ENCODE measurements at regions of chr12 and their contacts with region 1.

Region 1: GRCh38 chr12:101885912-101886561 is 8.7 kb downstream of the DRAM1 start:
- DNase-seq: no peak
- H3K4me3 ChIP-seq: no peak overlapping the region
- H3K27ac ChIP-seq: no peak overlapping the region
- H3K4me1 ChIP-seq: no peaks in the 10 kb centered on the region; the same call in 1 of the 2 replicates
- H3K27me3 ChIP-seq: no peaks in the 10 kb centered on the region
- CTCF ChIP-seq: no peak

Region 2: DNA sequence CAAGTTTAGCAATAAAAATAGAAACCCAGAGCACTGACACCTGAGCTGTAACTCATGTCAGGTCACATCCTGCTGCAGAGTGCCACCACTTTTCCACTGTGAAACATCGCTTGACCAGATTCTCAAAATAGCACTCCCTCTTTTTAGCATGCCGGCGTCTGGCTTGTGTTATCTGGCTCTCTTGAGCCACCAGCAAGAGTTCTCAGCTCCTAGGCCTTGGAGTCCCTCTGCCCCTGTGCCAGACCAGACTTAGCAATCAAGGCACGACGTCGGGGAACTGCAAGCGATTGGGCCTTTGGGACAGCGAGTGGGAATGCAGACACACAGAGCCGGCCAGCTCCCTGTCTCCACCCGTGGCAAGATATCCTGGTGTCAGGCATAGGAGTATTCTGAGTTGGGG is 358.4 kb before region 1 on chr12:
- CTCF ChIA-PET with region 1: no interaction called
- POLR2A ChIA-PET with region 1: no interaction called
- intact Hi-C with region 1: no loop called
- DNase-seq: no peak
- H3K4me3 ChIP-seq: no peak overlapping the region
- H3K27ac ChIP-seq: no peak overlapping the region
- H3K4me1 ChIP-seq: no peaks in the 10 kb centered on the region
- H3K27me3 ChIP-seq: no peaks in the 10 kb centered on the region
- CTCF ChIP-seq: no peak

Region 3: DNA sequence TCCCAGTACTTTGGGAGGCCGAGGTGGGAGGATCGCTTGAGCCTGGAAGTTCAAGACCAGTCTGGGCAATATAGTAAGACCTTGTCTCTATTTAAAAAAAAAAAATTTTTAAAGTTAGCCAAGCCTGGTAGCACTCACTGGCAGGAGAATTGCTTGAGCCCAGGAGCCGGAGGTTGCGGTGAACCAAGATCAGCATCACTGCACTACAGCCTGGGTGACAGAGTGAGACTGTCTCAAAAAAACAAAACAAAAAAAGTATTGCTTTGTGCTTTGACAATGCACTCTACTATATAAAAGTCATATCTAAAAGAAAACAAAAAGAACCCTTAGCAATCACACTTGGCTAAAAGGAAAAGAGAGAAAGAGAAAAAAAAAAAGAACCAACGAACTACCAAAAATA is 82.1 kb before region 1 on chr12:
- CTCF ChIA-PET with region 1: no interaction called
- POLR2A ChIA-PET with region 1: interaction called, 13 read pairs
- intact Hi-C with region 1: no loop called
- DNase-seq: no peak
- H3K4me3 ChIP-seq: no peak overlapping the region
- H3K27ac ChIP-seq: no peak overlapping the region
- H3K4me1 ChIP-seq: no peaks in the 10 kb centered on the region
- H3K27me3 ChIP-seq: no peaks in the 10 kb centered on the region
- CTCF ChIP-seq: no peak

Region 4: GRCh38 chr12:101863981-101864380 is 22.1 kb before region 1 on chr12:
- CTCF ChIA-PET with region 1: no interaction called
- POLR2A ChIA-PET with region 1: interaction called, 17 read pairs
- intact Hi-C with region 1: no loop called
- DNase-seq: no peak
- H3K4me3 ChIP-seq: no peak overlapping the region
- H3K27ac ChIP-seq: no peak overlapping the region
- H3K4me1 ChIP-seq: peaks cover 17% of the 10 kb centered on the region
- H3K27me3 ChIP-seq: no peaks in the 10 kb centered on the region
- CTCF ChIP-seq: no peak